Activated CD4-positive, alpha-beta T cell treated with anti-CD3 and anti-CD28 coated beads for 36 hours (primary cell): ENCODE measurements at regions of chr10 and their contacts with region 1.

Region 1: GRCh38 chr10:70162892-70163201 is 7.5 kb downstream of the SAR1A start:
- DNase-seq: peak; percentile 84
- ATAC-seq: peak; percentile 87
- H3K4me3 Mint-ChIP-seq: peak overlapping the region; percentile 60
- H3K27ac Mint-ChIP-seq: peak overlapping the region; percentile 90
- H3K4me1 Mint-ChIP-seq: peaks cover 74% of the 10 kb centered on the region
- H3K27me3 Mint-ChIP-seq: no peaks in the 10 kb centered on the region

Region 2: DNA sequence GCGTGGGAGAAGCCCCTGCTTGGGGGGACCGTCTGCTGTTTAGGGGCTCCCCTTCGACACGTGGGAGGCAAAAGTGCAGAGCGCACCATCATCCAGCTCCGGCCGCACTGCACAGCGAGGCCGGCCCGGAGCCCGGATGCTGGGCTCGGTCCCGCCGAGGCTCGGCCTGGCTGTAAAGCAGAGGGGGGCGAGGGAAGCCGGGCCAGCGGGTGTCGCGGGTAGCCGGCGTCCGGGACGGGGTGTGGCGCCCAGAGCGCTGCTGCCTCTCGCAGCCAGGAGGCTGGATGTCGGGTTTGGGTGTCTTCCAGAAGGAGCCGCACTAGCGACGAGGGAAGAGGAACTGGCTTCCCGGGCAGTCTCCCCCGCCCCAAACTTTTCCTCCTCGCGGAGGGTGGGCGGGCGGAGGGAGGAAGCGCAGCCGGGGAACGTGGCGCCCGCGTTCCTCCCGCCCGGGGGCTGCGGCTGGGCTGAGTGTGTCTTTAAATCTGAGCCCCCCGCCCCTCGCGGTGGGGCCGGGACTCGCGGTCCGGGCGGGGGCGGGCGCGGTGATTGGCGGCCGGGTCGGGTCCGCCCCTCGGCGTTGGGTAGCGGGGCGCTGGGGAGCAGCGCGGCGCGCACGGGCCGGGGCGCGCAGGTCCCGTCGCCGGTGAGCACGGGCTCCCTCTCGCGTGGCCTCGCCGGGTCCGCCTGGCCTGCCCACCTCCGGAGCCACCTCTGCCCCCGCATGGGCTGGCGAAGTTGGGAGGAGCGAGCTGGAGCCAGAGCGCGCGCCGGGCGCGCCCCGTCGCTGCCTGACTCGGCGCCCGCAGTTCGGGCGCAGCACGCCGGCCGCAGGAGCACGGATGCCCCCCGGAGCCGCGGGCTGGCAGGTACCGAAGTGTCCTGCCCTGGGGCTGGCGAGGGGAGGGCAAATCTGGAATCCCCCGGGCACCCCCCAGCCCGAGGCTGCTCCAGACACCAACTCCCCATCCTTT is 315.6 kb after region 1 on chr10 and contains the start of gene PALD1:
- CTCF ChIA-PET with region 1: no interaction called
- POLR2A ChIA-PET with region 1: no interaction called
- intact Hi-C with region 1: loop called in 1 of 2 experiments (anchors 5 kb)
- DNase-seq: peak; percentile 76
- ATAC-seq: peak; percentile 45
- H3K4me3 Mint-ChIP-seq: peak within 1 kb of the TSS; percentile 70
- H3K27ac Mint-ChIP-seq: peak within 1 kb of the TSS; percentile 67
- H3K4me1 Mint-ChIP-seq: peaks cover 41% of the 10 kb centered on the region
- H3K27me3 Mint-ChIP-seq: peaks cover 19% of the 10 kb centered on the region
- total RNA-seq, gene PALD1: 5.4 to 6.7 TPM